Activated naive CD8-positive, alpha-beta T cell treated with anti-CD3 and anti-CD28 coated beads, Interleukin-2, amount 10 ng/mL, durations not matched to agents 7 days and 5 days (primary cell): ENCODE measurements at regions of chr12 and their contacts with region 1.

Region 1: GRCh38 chr12:6632026-6632983 is 3.5 kb downstream of the LPAR5 start:
- DNase-seq: peak; percentile 54
- ATAC-seq: peak; percentile 79
- H3K4me3 Mint-ChIP-seq: peak overlapping the region; percentile 89
- H3K27ac Mint-ChIP-seq: peak overlapping the region; percentile 99
- H3K4me1 Mint-ChIP-seq: peaks cover 57% of the 10 kb centered on the region
- H3K27me3 Mint-ChIP-seq: no peaks in the 10 kb centered on the region

Region 2: DNA sequence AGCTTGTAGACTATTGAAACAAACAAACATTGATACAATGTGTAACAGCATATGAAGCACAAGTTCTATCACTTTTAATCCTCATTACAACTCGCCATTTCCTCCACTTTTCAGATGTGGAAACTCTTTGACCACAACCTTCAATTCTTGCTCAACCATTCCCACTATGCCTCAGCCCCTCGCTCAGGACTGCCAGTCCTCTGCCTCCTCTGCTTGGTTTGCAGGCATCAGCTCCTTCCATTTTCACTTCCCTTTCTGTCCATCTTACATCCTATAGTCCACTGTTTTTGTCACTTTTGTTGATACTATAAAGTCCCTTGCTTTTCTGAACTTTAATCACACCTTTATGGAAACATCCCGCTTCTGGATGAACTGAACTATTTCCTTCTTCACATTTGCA is 215.7 kb before region 1 on chr12:
- POLR2A ChIA-PET with region 1: no interaction called
- DNase-seq: no peak
- ATAC-seq: no peak
- H3K4me3 Mint-ChIP-seq: no peak overlapping the region
- H3K27ac Mint-ChIP-seq: no peak overlapping the region
- H3K4me1 Mint-ChIP-seq: peaks cover 12% of the 10 kb centered on the region
- H3K27me3 Mint-ChIP-seq: peaks cover 11% of the 10 kb centered on the region

Region 3: GRCh38 chr12:6607751-6608591 is 24.3 kb before region 1 on chr12:
- POLR2A ChIA-PET with region 1: interaction called, 28 read pairs
- DNase-seq: peak; percentile 54
- ATAC-seq: peak; percentile 63
- H3K4me3 Mint-ChIP-seq: no peak overlapping the region
- H3K27ac Mint-ChIP-seq: no peak overlapping the region
- H3K4me1 Mint-ChIP-seq: peaks cover 48% of the 10 kb centered on the region
- H3K27me3 Mint-ChIP-seq: no peaks in the 10 kb centered on the region

Region 4: GRCh38 chr12:6613776-6614512 is 18.4 kb before region 1 on chr12:
- POLR2A ChIA-PET with region 1: interaction called, 28 read pairs
- DNase-seq: peak; percentile 65
- ATAC-seq: peak; percentile 48
- H3K4me3 Mint-ChIP-seq: no peak overlapping the region
- H3K27ac Mint-ChIP-seq: peak overlapping the region; percentile 87
- H3K4me1 Mint-ChIP-seq: peaks cover 50% of the 10 kb centered on the region
- H3K27me3 Mint-ChIP-seq: no peaks in the 10 kb centered on the region

Region 5: DNA sequence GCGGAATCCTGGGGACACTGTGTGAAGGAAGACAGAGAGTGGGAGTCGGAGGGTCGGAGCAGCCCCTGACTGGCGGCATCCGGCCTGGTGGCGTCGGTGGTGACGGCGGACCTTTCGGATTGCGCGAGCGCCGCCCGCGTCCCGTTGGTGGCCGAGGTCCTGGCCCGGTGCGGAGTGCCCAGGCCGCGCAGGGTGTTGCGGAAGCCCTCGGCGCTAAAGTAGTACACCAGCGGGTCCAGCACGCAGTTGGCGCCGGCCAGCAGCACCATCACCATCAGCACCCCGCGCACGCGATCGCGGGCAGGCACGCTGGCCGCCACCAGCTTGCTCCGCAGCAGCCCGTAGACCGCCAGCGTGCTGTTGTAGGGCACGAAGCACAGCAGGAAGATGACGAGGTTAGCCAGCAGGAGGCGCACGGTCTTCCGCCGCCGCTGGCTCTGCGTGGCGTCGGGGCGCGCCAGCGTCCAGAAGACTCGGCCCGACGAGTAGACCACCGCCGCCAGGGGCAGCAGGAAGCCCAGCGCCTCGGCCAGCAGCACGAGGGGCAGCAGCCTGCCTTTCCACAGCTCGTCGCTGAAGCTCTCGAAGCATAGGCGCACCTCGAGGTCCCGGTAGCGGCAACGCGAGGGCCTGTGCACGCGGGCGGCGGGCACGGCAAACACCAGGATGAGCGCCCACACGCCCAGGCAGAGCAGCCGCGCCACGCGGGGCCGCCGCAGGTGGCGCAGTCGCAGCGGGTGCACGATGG is 12.0 kb before region 1 on chr12:
- POLR2A ChIA-PET with region 1: interaction called, 28 read pairs
- DNase-seq: peak; percentile 73
- ATAC-seq: peak; percentile 81
- H3K4me3 Mint-ChIP-seq: peak overlapping the region; percentile 72
- H3K27ac Mint-ChIP-seq: no peak overlapping the region
- H3K4me1 Mint-ChIP-seq: peaks cover 21% of the 10 kb centered on the region
- H3K27me3 Mint-ChIP-seq: no peaks in the 10 kb centered on the region

Region 6: GRCh38 chr12:6647083-6647604 is 14.8 kb after region 1 on chr12 and contains the start of gene ACRBP:
- POLR2A ChIA-PET with region 1: interaction called, 10 read pairs
- DNase-seq: peak; percentile 64
- ATAC-seq: peak; percentile 69
- H3K4me3 Mint-ChIP-seq: peak within 1 kb of the TSS; percentile 74
- H3K27ac Mint-ChIP-seq: peak within 1 kb of the TSS; percentile 64
- H3K4me1 Mint-ChIP-seq: peaks cover 17% of the 10 kb centered on the region
- H3K27me3 Mint-ChIP-seq: no peaks in the 10 kb centered on the region
- total RNA-seq, gene ACRBP: 8.0 to 8.8 TPM

Region 7: GRCh38 chr12:6662906-6663742 is 30.8 kb after region 1 on chr12 and contains the start of gene ING4:
- POLR2A ChIA-PET with region 1: interaction called, 10 read pairs
- DNase-seq: peak; percentile 88
- ATAC-seq: peak; percentile 99
- H3K4me3 Mint-ChIP-seq: peak within 1 kb of the TSS; percentile 100
- H3K27ac Mint-ChIP-seq: peak within 1 kb of the TSS; percentile 99
- H3K4me1 Mint-ChIP-seq: peaks cover 13% of the 10 kb centered on the region
- H3K27me3 Mint-ChIP-seq: no peaks in the 10 kb centered on the region
- total RNA-seq, gene ING4: 46.9 to 49.3 TPM

Region 8: DNA sequence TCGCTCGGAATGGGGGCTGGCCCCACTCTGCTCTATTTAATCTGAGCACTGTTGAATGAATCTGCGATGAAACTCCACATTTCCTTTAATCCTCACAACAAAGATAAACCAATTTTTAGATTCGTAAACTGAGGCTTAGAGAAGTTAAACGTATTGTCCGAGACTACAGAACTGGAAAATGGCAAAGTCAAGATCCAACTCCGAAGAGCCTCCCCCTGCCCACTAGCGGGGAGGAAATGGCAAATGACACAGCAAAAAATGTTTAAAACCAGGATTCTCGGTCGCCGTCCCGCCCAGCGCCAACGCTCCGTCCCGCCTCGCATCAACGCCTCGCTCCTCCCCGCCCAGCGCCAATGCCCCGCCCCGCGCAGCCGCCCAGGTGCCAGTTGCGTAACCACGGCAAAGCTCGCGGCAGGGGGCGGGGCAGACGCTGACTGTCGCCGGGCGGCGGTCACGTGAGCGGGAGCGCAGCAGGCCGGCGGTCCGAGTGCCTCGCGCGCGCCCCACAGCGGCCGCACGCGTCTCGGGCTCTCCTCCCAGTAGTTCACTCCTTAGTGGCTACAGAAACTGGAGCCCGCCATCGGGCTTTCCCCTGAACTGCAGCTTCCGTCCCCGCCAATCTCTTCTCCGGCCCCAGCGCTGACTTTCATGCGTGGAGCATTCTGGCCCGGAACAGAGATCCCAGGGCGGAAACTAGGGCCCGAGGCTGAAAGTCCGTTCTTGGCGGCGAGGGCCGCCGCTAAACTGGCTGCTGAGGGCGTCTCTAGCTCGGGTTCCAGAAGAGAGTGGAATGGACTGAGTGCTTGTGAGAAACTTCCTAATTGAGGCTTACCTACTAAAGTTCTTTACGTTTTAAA is 258.7 kb after region 1 on chr12:
- POLR2A ChIA-PET with region 1: interaction called, 14 read pairs
- DNase-seq: peak; percentile 100
- ATAC-seq: peak; percentile 97
- H3K4me3 Mint-ChIP-seq: peak overlapping the region; percentile 88
- H3K27ac Mint-ChIP-seq: peak overlapping the region; percentile 91
- H3K4me1 Mint-ChIP-seq: peaks cover 17% of the 10 kb centered on the region
- H3K27me3 Mint-ChIP-seq: no peaks in the 10 kb centered on the region